Activated CD4-positive, alpha-beta memory T cell treated with anti-CD3 and anti-CD28 coated beads for 36 hours (primary cell): ENCODE measurements at regions of chr1 and their contacts with region 1.

Region 1: DNA sequence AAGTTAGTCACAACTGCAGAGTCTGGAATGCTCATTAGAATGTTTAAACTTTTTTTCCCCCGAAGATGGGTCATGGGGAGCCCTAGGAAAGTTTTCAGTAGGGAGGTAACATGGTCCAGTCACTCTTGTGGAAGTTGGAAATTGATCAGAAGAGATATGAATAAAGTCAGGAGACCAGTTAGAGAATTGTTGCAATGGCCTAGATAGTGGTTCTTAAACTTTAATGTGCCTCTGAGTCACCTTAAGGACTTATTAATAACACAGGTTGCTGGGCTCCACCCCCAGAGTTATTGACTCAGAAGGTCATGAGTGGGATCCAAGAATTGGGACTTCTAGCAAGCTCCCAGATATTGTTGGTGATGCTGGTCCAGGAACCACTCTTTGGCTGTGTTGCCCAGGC is 3.2 kb upstream of the TFAP2E start:
- DNase-seq: no peak
- H3K4me3 Mint-ChIP-seq: no peak overlapping the region
- H3K27ac Mint-ChIP-seq: no peak overlapping the region
- H3K4me1 Mint-ChIP-seq: peaks cover 1% of the 10 kb centered on the region
- H3K27me3 Mint-ChIP-seq: no peaks in the 10 kb centered on the region

Region 2: DNA sequence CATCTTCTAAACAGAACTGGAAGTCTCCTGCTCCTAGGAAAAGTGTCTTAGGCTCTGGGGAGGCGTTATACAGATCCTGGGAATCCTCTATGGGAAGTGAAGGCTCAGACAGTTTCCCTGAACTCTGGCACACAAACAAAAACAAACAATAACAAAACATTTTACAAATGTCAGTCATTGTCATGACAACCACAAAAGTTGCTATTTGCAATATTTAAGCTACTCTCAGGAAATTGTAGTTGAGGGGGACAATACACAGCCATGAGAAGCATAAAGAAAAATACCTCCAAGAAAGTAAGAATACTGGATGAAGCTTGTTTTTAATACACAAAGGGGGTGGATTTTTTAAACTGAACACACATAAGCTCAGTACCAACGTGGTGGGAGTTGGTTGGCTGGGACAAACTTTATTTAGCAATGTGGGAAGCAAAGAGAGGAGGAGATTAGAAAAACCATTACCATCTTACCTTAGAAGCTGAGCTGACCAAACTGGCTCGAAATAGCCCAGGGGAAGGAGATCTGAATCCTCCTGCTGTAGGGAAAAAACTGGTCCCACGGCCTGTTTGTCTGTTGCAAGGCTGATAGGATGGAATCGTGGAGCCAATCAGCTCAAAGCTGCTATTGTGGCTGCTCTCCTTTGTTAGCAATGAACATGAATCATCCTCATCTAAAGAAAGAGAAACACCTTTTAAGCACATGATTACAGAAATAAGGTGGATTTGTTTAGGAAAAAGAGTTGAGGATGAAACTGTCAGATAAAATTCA is 178.2 kb after region 1 on chr1:
- CTCF ChIA-PET with region 1: no interaction called
- POLR2A ChIA-PET with region 1: no interaction called
- intact Hi-C with region 1: no loop called
- DNase-seq: no peak
- H3K4me3 Mint-ChIP-seq: no peak overlapping the region
- H3K27ac Mint-ChIP-seq: no peak overlapping the region
- H3K4me1 Mint-ChIP-seq: no peaks in the 10 kb centered on the region
- H3K27me3 Mint-ChIP-seq: no peaks in the 10 kb centered on the region

Region 3: DNA sequence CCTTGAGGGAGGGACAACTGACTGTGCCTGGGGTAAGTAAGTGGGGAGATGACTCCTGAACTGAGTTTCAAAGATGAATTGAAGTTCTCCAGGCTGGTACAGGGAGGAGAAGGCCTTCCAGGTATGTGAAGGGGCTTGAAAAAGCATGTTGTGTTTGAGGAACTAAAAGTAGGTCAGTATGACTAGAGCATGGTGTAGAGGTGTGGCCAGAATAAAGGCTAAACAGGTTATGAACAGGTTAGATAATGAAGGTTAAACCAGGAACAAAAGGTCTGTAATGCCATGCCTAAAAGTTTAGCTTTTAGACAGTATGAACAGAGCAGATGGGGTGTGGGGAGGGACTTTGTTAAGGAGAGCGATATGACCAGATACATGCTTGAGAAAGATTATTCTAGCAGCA is 207.2 kb after region 1 on chr1:
- CTCF ChIA-PET with region 1: interaction called, 18 read pairs
- POLR2A ChIA-PET with region 1: no interaction called
- intact Hi-C with region 1: loop called (anchors 1 kb)
- DNase-seq: no peak
- H3K4me3 Mint-ChIP-seq: no peak overlapping the region
- H3K27ac Mint-ChIP-seq: no peak overlapping the region
- H3K4me1 Mint-ChIP-seq: peaks cover 5% of the 10 kb centered on the region
- H3K27me3 Mint-ChIP-seq: no peaks in the 10 kb centered on the region